Heart left ventricle (tissue), 16 donors: ENCODE measurements at regions of chr1 and their contacts with region 1.

Region 1: DNA sequence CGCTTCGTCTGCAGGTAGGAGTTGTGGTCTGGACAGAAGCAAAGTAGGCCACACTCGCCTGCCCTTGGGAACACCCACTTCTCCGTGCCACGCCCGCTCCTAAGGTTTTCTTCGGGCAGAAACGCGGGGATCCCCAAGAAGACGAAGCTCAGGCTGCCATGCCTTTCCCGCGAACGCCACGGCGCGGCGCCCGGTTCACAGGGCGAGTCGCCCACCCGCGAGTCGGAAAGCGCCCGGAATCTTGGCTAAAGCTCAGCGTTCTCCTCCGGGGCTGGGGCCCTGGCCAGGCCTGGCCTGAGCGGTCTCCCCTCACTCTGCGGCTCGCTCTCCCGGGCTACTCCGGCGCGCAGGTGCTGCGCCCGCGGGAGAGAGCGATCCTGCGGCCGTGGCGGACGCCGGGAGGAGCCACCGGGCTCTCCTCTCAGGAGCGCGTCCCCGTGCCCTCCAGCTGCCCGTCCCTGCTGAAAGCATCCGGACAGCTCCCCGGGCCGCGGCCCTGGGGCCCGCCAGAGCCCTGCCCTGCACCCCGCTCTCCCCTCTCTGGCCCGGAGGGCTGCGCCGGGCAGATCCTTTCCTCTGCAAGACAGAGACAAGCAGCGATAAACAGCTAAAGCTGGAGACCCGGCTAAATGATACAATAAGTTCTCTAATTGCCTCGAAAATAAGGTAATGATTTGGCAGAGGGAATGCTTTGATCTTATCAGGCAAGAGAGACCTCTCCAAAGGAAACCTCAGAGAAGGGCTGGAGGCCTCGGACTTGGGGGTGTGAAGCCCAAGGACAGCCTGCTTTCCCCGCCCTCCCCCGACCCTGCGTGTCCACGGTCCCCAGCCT is 6.7 kb upstream of the WNT2B start:
- DNase-seq: peak; percentile 60 to 85 (median 78)
- ATAC-seq: peak; percentile 72 to 88 (median 86)
- H3K4me3 ChIP-seq: peak overlapping the region; percentile 14 to 67 (median 60)
- H3K27ac ChIP-seq: peak overlapping the region in 9 of 12 donors; percentile 52 to 78 (median 72)
- H3K4me1 ChIP-seq: peaks cover 0 to 23% (median 11%) of the 10 kb centered on the region in 12 donors
- H3K27me3 ChIP-seq: peaks cover 0 to 41% (median 0%) of the 10 kb centered on the region in 9 donors
- CTCF ChIP-seq: peak; percentile 49 to 85 (median 68)
- POLR2A ChIP-seq: no peak

Region 2: DNA sequence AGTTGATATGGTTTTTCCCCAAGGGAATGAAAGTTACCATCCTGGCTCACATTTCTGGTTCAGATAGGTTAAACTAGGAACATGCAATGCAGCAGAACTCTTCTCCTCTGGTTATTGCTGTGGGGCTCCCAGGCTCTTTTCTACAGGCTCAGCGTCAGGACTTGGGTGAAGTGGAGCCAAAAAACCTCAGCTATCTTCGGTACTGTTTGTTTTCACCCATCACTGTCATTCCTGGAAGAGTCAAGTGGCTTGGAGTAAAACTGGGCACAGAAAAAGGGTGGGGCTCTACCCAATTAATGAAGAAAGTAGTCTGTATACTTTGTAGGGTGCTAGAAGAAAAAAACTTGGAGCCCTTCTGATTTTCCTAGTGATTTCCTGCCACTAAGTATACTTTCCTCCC is 16.2 kb after region 1 on chr1:
- intact Hi-C with region 1: loop called in 1 of 10 experiments (anchors 2 kb)
- DNase-seq: no peak
- ATAC-seq: peak; percentile 53 to 83 (median 70)
- H3K4me3 ChIP-seq: no peak overlapping the region
- H3K27ac ChIP-seq: peak overlapping the region in 10 of 12 donors; percentile 5 to 81 (median 36)
- H3K4me1 ChIP-seq: peaks cover 0 to 30% (median 5%) of the 10 kb centered on the region in 12 donors
- H3K27me3 ChIP-seq: no peaks in the 10 kb centered on the region
- CTCF ChIP-seq: no peak
- POLR2A ChIP-seq: no peak

Region 3: GRCh38 chr1:112544011-112544688 is 42.1 kb after region 1 on chr1:
- intact Hi-C with region 1: loop called in 1 of 10 experiments (anchors 1 kb)
- DNase-seq: no peak
- ATAC-seq: peak in 3 of 4 donors; percentile 83 to 91 (median 90)
- H3K4me3 ChIP-seq: no peak overlapping the region
- H3K27ac ChIP-seq: peak overlapping the region in 9 of 12 donors; percentile 12 to 65 (median 44)
- H3K4me1 ChIP-seq: peaks cover 0 to 21% (median 5%) of the 10 kb centered on the region in 12 donors
- H3K27me3 ChIP-seq: no peaks in the 10 kb centered on the region
- CTCF ChIP-seq: no peak
- POLR2A ChIP-seq: no peak

Region 4: GRCh38 chr1:112614460-112615065 is 112.5 kb after region 1 on chr1:
- intact Hi-C with region 1: loop called in 3 of 10 experiments (anchors 5 to 10 kb)
- DNase-seq: no peak
- ATAC-seq: no peak
- H3K4me3 ChIP-seq: no peak overlapping the region
- H3K27ac ChIP-seq: no peak overlapping the region
- H3K4me1 ChIP-seq: peaks cover 0 to 17% (median 9%) of the 10 kb centered on the region in 12 donors
- H3K27me3 ChIP-seq: no peaks in the 10 kb centered on the region
- CTCF ChIP-seq: peak in 11 of 12 donors; percentile 4 to 55 (median 35)
- POLR2A ChIP-seq: no peak

Region 5: DNA sequence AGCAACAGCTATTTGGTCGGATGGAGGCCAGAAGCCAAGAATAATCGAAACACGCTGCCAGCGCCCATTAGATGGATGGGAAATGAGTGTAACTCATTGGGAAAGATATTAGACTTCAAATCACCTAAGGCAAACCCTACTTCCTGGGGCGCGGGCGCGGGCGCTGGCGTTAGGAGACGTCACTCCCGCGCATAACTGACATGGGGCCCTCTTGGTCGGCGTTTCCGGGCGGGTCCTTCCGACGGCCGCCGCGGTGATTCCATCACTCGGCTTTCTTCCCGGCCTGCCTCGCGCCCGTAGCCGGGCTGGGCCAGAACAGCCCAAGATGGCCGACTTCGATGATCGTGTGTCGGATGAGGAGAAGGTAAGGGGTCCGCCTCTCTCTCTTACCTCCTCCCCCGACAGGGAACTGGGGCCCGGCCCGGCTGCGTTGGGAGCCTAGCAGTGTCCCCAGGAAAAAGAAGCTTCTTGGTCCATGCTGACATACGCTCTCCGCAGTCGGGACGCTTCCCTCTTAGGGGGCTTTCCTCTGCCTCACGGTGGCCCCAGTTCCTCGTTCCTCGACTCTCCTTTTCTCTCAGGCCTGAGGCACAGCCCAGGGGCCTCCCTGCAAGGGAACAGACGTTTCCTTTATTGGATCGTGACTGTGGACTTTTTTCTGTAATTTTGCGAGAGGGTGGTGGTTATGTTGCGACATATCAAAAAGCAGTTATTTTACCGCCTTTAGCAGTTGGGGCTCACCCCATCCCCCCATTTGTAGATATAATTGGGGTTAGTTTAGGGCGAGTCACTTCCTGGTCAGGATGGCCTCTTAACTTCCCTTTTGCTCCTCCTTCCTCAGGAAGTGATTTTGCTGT is 117.7 kb after region 1 on chr1 and contains the start of gene CAPZA1:
- intact Hi-C with region 1: loop called in 3 of 10 experiments (anchors 5 to 10 kb)
- DNase-seq: peak; percentile 93 to 95 (median 94)
- ATAC-seq: peak; percentile 97 to 99 (median 98)
- H3K4me3 ChIP-seq: peak within 1 kb of the TSS; percentile 71 to 99 (median 89)
- H3K27ac ChIP-seq: peak within 1 kb of the TSS; percentile 92 to 100 (median 98)
- H3K4me1 ChIP-seq: peaks cover 0 to 59% (median 46%) of the 10 kb centered on the region in 12 donors
- H3K27me3 ChIP-seq: no peaks in the 10 kb centered on the region
- CTCF ChIP-seq: no peak
- POLR2A ChIP-seq: peak in 1 of 2 donors; percentile 74
- total RNA-seq, gene CAPZA1: 23.8 to 98.4 (median 32.6) TPM

Region 6: GRCh38 chr1:112706908-112707663 is 205.1 kb after region 1 on chr1 and contains the start of gene RHOC:
- intact Hi-C with region 1: loop called in 7 of 10 experiments (anchors 2 to 10 kb)
- DNase-seq: peak; percentile 90 to 93 (median 92)
- ATAC-seq: peak; percentile 56 to 87 (median 74)
- H3K4me3 ChIP-seq: peak within 1 kb of the TSS; percentile 75 to 100 (median 98)
- H3K27ac ChIP-seq: peak within 1 kb of the TSS; percentile 92 to 100 (median 99)
- H3K4me1 ChIP-seq: peaks cover 3 to 49% (median 39%) of the 10 kb centered on the region in 12 donors
- H3K27me3 ChIP-seq: no peaks in the 10 kb centered on the region
- CTCF ChIP-seq: peak; percentile 83 to 97 (median 94)
- POLR2A ChIP-seq: peak; percentile 64 to 95
- total RNA-seq, gene RHOC: 147 to 432 (median 217) TPM